Activated CD4-positive, alpha-beta memory T cell treated with anti-CD3 and anti-CD28 coated beads, Interleukin-2, amount 10 ng/mL, durations not matched to agents 7 days and 5 days (primary cell): ENCODE measurements at regions of chr1 and their contacts with region 1.

Region 1: DNA sequence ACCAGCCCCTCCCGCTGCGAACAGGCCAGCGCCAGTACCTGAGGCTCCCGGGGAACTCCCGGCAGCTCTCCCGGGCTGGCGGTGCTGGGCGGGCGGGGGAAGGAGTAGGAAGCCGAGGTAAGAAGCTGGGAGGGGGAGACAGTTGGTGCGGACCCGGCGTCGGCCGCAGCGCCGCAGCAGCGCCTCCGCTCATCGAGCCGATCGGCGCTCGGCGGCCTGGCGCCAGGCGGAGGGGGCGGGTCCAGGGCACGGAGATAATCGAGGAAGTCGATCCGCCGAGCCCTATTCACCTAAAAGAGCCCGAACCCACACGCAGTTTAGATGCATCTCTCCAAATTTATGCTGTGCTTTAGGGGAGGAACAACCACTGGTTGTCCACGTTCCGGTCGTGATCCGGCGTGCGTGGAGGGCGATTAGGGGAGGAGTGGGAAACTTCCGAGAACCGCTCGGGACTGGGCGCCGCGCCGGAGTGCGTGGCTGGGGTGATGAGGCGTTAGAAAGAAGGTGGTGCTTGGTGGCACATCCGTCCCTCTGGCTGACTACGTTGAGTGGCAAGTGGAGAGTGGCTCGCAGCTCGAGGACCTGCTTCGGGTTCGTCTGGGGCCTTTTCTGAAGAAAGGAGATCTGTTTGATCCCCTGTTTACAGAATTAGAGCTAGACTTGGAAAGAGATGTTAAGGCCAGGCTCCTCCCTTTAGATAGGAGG is at the start of gene VAMP4:
- DNase-seq: peak; percentile 89
- H3K4me3 Mint-ChIP-seq: peak within 1 kb of the TSS; percentile 99
- H3K27ac Mint-ChIP-seq: peak within 1 kb of the TSS; percentile 100
- H3K4me1 Mint-ChIP-seq: peaks cover 48% of the 10 kb centered on the region
- H3K27me3 Mint-ChIP-seq: no peaks in the 10 kb centered on the region
- total RNA-seq, gene VAMP4: 31.3 to 31.5 TPM

Region 2: DNA sequence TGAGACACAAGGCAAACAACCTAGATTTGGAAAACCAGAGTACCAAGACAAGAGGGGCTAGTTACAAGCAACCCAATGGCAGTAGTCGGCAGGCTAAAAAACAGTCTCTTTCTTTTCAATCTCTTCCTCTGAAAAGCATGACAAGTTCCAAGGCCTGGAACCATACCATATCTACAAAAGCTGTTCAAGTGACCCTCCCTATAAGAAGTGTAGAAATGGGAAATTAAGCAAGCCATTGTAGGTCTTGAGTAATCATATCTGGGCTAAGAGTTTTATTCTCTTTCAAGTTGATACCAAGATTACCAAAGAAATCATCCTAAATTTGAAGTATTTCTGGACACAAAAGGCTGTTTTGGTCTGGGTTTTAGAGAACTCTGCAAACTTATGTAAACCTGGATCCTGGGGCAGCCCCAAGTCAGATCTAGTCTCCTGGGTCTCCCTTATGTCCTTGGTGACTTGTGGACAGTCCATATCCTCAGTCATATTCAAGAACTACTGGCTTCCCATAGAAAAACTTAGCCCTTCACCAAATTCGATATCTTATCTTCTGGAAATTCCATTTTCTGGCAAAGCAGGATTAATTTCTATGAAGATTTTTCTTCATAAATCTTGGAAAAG is 626.6 kb before region 1 on chr1:
- CTCF ChIA-PET with region 1: no interaction called
- POLR2A ChIA-PET with region 1: no interaction called
- DNase-seq: no peak
- H3K4me3 Mint-ChIP-seq: no peak overlapping the region
- H3K27ac Mint-ChIP-seq: no peak overlapping the region
- H3K4me1 Mint-ChIP-seq: no peaks in the 10 kb centered on the region
- H3K27me3 Mint-ChIP-seq: peaks cover 5% of the 10 kb centered on the region

Region 3: DNA sequence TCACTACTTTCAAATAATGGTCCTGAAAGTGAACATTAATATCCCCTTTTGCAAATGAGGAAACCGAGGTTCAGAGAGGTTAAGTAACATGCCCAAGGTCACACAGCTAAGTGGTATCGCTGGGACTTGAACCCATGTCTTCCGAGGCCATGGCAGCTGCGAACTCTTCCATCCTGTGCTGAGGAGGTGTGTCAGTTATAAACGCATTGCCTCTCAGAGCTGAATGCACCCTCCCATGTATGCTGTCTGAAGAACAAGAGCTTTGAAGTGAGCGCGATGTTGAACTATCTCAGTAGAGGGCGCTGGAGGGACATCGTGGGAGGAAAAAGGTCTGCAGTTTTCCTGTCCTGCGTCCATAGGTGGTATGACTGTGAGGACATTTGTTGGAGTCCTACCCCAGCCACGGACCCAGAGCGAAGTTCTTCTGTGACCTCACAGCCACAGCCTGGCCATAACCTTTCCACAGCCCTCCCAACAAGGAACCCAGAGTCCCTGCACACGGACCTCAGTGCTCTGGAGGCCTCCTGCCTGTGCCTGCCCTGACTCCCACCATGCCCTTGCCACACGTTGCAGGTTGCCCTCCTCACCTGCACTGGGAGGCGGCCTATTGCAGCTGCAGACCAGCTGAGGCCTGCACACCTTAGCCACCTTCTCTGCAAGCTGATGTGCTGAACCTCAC is 97.1 kb before region 1 on chr1:
- CTCF ChIA-PET with region 1: interaction called, 12 read pairs
- POLR2A ChIA-PET with region 1: interaction called, 3 read pairs
- DNase-seq: peak; percentile 74
- H3K4me3 Mint-ChIP-seq: no peak overlapping the region
- H3K27ac Mint-ChIP-seq: no peak overlapping the region
- H3K4me1 Mint-ChIP-seq: peaks cover 5% of the 10 kb centered on the region
- H3K27me3 Mint-ChIP-seq: peaks cover 2% of the 10 kb centered on the region

Region 4: GRCh38 chr1:171754353-171754705 is 12.3 kb after region 1 on chr1:
- CTCF ChIA-PET with region 1: interaction called, 3 read pairs
- POLR2A ChIA-PET with region 1: interaction called, 19 read pairs
- DNase-seq: no peak
- H3K4me3 Mint-ChIP-seq: no peak overlapping the region
- H3K27ac Mint-ChIP-seq: no peak overlapping the region
- H3K4me1 Mint-ChIP-seq: peaks cover 14% of the 10 kb centered on the region
- H3K27me3 Mint-ChIP-seq: peaks cover 7% of the 10 kb centered on the region

Region 5: GRCh38 chr1:171794085-171794484 is 52.1 kb after region 1 on chr1:
- CTCF ChIA-PET with region 1: interaction called, 3 read pairs
- POLR2A ChIA-PET with region 1: interaction called, 10 read pairs
- DNase-seq: peak; percentile 70
- H3K4me3 Mint-ChIP-seq: no peak overlapping the region
- H3K27ac Mint-ChIP-seq: peak overlapping the region; percentile 83
- H3K4me1 Mint-ChIP-seq: peaks cover 32% of the 10 kb centered on the region
- H3K27me3 Mint-ChIP-seq: no peaks in the 10 kb centered on the region